Uterus (tissue), 4 donors: ENCODE measurements at regions of chr10 and their contacts with region 1.

Region 1: DNA sequence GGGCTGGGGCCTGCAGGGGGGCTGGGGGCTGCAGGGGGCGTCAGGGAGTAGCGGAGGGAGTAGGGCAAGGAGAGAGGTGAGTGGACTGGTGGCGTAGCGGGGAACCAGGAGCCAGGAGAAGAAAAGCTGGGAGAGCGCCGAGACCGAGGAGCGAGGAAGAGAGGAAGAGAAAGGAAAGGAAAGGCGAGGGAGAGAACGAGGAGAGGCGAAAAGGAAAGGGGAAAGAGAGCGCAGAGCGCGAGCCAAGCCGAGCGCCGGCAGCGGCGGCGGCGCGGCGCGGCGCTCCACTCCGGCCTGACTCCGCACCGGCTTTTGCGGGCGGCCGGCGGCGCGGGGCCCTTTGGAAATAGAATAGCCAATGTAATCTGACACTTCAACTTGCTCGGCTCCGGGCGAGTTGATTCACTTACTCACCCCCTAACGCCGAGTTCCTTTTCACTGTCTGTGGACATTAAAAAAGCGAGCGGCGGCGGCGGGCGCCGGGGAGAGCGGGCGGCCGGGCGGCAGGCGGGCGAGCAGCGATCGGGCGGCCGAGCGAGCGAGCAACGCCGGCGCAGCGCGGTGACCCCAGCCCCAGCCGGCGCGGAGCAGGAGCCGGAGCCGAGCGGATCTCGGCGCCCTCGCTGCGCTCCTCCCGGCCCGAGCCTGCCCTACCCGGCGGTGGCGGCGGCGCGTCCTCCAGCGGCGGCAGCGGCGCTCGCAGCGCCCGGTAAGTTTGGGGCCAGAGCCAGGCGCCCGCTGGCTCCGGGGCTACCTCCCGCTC is at the start of gene ZMIZ1:
- DNase-seq: peak; percentile 90 to 93
- H3K4me3 ChIP-seq: peak within 1 kb of the TSS; percentile 75 to 86
- H3K27ac ChIP-seq: peak within 1 kb of the TSS; percentile 94 to 96
- H3K4me1 ChIP-seq: peaks cover 8 to 23% of the 10 kb centered on the region in 2 donors
- H3K27me3 ChIP-seq: peaks cover 0 to 2% of the 10 kb centered on the region in 2 donors
- CTCF ChIP-seq: peak in 1 of 4 experiments; percentile 50
- POLR2A ChIP-seq: peak; percentile 87 to 93
- total RNA-seq, gene ZMIZ1: 18.7 to 188 (median 36.7) TPM

Region 2: DNA sequence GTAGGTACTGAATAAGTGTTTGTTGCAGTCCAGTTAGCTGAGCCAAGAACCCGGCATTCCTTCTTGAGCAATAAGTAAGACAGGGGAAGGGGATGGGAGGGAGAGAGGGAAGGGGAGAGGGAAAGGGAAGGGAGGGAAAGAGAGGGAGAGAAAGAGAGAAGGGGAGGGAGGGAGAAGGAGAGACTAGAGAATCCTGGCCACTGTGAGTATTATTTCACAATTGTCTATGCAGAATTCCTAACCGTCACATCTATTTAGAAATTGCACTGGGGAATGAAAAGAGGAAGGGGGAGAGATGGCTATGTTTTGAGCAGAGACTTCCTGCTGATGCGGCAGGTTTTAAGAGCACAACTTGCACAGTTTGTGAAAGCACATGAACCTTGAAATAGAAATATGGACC is 251.4 kb before region 1 on chr10:
- intact Hi-C with region 1: loop called (anchors 10 kb)
- DNase-seq: peak; percentile 36 to 73
- H3K4me3 ChIP-seq: no peak overlapping the region
- H3K27ac ChIP-seq: no peak overlapping the region
- H3K4me1 ChIP-seq: no peaks in the 10 kb centered on the region
- H3K27me3 ChIP-seq: no peaks in the 10 kb centered on the region
- CTCF ChIP-seq: no peak
- POLR2A ChIP-seq: no peak

Region 3: GRCh38 chr10:79001082-79001885 is 67.5 kb before region 1 on chr10:
- intact Hi-C with region 1: no loop called
- DNase-seq: no peak
- H3K4me3 ChIP-seq: no peak overlapping the region
- H3K27ac ChIP-seq: no peak overlapping the region
- H3K4me1 ChIP-seq: no peaks in the 10 kb centered on the region
- H3K27me3 ChIP-seq: no peaks in the 10 kb centered on the region
- CTCF ChIP-seq: no peak
- POLR2A ChIP-seq: no peak

Region 4: DNA sequence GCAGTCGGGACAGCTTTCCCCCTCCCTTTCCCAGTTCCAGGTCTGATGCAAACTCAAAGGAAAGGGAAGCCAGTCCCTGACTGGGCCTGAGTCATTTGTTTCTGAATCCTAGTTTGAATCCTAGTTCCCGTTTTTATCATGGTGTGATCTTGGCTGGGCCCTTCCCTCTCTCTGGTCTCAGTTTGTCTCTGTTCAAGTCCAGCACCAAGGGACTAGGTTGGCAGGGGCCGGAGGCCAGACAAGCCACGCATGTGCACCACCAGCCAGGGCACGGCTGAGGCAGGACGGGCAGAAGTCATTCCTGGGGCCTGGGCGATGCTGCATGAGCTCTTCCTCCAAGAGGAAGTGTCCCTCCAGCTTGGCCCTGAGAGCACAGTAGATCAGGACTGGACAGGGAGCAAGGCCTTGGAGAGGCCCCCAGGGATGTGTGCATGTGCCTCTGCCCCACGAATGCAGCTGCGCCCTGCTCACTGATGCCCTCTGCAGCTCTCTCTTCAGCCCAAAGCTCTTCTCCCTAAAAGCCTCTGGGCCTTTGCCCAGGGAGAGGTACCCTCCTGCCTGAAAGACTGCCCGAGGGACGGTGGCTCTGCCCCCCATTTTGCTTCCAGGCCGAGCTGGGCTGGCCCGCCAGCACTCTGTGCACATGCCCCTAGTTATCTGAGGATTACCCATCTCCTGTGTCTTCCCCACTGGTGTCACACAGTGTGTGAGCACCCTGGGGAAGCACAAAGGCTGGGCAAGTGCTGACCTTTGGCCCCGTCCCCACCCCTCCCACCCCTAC is 86.7 kb after region 1 on chr10:
- intact Hi-C with region 1: loop called (anchors 5 kb)
- DNase-seq: peak in 1 of 2 donors; percentile 41
- H3K4me3 ChIP-seq: no peak overlapping the region
- H3K27ac ChIP-seq: peak overlapping the region; percentile 93 to 94
- H3K4me1 ChIP-seq: peaks cover 17 to 80% of the 10 kb centered on the region in 2 donors
- H3K27me3 ChIP-seq: no peaks in the 10 kb centered on the region
- CTCF ChIP-seq: peak in 1 of 4 experiments; percentile 6
- POLR2A ChIP-seq: no peak

Region 5: DNA sequence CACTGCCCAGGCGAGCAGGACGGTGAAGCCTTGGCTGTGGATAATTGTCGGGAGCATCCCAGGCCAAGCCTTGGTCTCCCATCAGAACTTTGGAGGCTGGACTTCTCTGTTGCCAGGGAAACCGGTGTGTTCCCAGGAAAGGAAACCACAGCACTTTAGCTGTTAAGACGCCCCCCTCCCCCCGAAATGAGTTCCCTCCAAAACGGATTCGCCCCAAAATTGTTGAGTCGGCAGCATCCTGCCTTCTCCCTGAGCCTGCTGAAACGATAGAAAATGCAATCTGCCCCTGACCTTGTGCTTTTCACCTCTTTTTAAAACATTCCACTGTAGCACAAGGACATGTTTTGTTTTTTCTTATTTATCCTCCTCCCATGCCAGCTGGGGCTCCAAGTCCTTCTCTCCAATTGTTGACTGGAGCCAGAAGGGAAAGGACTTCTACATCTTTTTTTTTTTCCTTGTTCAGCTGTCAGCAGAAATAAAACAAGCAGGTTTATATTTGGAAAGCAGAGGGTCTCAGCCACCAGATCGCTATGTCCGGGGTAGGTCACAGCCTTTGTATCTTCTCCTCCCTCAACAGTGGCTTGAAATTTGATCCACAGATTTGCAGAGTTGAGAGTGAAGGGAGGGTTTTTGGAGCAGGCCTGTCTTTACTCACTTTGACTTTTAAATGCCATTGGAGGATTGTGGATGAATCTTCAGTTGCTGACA is 116.5 kb after region 1 on chr10:
- intact Hi-C with region 1: loop called (anchors 5 kb)
- DNase-seq: peak in 1 of 2 donors; percentile 66
- H3K4me3 ChIP-seq: no peak overlapping the region
- H3K27ac ChIP-seq: peak overlapping the region; percentile 78
- H3K4me1 ChIP-seq: peaks cover 34 to 43% of the 10 kb centered on the region in 2 donors
- H3K27me3 ChIP-seq: no peaks in the 10 kb centered on the region
- CTCF ChIP-seq: no peak
- POLR2A ChIP-seq: peak in 1 of 2 donors; percentile 6